ENCODE measurements at regions of chr21 and their contacts with region 1.

Region 1: GRCh38 chr21:29849735-29850176 is 90.0 kb downstream of the GRIK1 start:
- DNase-seq: peak; percentile 17
- H3K4me3 ChIP-seq: no peak overlapping the region
- H3K27ac ChIP-seq: no peak overlapping the region
- H3K4me1 ChIP-seq: no peaks in the 10 kb centered on the region
- H3K27me3 ChIP-seq: peaks cover 6% of the 10 kb centered on the region
- CTCF ChIP-seq: peak; percentile 81

Region 2: DNA sequence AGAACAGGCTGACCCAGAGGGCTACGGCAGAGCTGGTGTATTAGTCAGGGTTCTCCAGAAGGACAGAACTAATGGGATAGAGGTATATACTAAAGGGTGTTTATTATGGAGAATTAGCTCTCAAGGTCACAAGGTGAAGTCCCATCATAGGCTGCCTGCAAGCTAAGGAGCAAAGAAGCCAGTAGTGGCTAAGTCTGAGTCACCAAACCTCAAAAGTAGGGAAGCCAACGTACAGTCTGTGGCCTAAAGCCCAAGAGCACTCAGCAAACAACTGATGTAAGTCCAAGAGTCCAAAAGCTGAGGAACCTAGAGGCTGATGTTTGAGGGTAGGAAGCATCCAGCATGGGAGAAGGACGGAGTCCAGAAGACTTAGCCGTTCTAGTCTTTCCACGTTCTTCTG is 371.8 kb before region 1 on chr21:
- intact Hi-C with region 1: loop called (anchors 5 kb)
- DNase-seq: no peak
- H3K4me3 ChIP-seq: no peak overlapping the region
- H3K27ac ChIP-seq: no peak overlapping the region
- H3K4me1 ChIP-seq: peaks cover 7% of the 10 kb centered on the region
- H3K27me3 ChIP-seq: no peaks in the 10 kb centered on the region
- CTCF ChIP-seq: no peak